ENCODE measurements at regions of chr5 and their contacts with region 1.

Region 1: DNA sequence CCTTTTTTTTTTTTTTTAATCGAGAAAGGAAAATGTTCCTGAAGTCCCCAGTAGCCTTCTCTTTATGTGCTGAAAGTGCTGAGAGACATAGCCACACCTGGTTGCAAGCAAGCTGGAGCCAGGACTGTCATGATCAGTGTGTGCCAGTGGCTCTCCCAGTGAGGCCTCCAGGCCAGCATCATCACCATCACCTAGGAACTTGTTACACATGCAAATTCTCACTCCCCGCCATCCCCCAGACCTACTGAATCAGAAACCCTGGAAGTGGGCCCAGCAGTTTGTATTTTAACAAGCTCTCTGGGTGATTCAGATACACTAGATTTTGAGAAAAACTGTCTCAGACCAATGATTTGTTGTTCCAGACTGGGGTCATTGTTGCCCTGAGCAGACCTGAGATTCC is 181.9 kb upstream of the GLRA1 start:
- DNase-seq: no peak
- ATAC-seq: no peak
- H3K4me3 ChIP-seq: no peak overlapping the region
- H3K27ac ChIP-seq: no peak overlapping the region
- H3K4me1 ChIP-seq: no peaks in the 10 kb centered on the region
- H3K27me3 ChIP-seq: peaks cover 23% of the 10 kb centered on the region
- CTCF ChIP-seq: no peak

Region 2: GRCh38 chr5:152205804-152206203 is 99.2 kb after region 1 on chr5:
- CTCF ChIA-PET with region 1: no interaction called
- POLR2A ChIA-PET with region 1: interaction called, 19 read pairs
- intact Hi-C with region 1: no loop called
- DNase-seq: no peak
- ATAC-seq: no peak
- H3K4me3 ChIP-seq: no peak overlapping the region
- H3K27ac ChIP-seq: no peak overlapping the region
- H3K4me1 ChIP-seq: peaks cover 13% of the 10 kb centered on the region
- H3K27me3 ChIP-seq: no peaks in the 10 kb centered on the region
- CTCF ChIP-seq: no peak